ENCODE measurements at regions of chr6 and their contacts with region 1.

Region 1: DNA sequence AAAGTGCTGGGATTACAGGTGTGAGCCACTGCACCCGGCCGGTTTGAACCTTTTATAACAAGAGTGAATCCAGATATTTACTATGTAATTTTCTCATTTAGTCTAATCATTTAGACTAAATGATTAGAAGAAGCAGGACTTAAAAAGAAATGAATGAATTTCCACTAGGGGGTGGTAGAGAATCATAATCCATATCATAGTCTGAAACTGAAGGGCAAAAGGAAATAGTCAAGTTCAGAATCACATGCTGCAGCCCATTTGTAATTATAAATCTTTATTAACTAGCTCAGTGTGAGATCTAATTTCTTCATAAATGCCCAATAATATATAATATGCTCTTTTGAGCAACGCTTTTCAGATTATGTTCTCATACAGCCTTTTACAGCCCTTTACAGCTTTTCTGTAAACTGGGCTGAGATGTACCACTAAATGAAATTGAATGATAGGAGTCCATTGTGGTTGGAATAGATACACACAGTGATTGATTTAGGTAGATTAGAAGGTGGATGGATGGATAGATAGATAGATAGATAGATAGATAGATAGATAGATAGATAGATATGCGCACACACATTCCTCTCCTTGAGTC is 31.8 kb downstream of the PSMB9 start:
- DNase-seq: no peak
- H3K4me3 ChIP-seq: no peak overlapping the region
- H3K27ac ChIP-seq: no peak overlapping the region
- H3K4me1 ChIP-seq: peaks cover 21% of the 10 kb centered on the region
- H3K27me3 ChIP-seq: no peaks in the 10 kb centered on the region
- CTCF ChIP-seq: peak; percentile 46 to 72 (median 53)
- POLR2A ChIP-seq: no peak

Region 2: GRCh38 chr6:32807020-32807580 is 78.7 kb before region 1 on chr6:
- intact Hi-C with region 1: no loop called
- DNase-seq: no peak
- H3K4me3 ChIP-seq: no peak overlapping the region
- H3K27ac ChIP-seq: no peak overlapping the region
- H3K4me1 ChIP-seq: no peaks in the 10 kb centered on the region
- H3K27me3 ChIP-seq: no peaks in the 10 kb centered on the region
- CTCF ChIP-seq: no peak
- POLR2A ChIP-seq: no peak

Region 3: GRCh38 chr6:33161354-33162331 is 275.9 kb after region 1 on chr6:
- intact Hi-C with region 1: loop called (anchors 10 kb)
- DNase-seq: no peak
- H3K4me3 ChIP-seq: peak overlapping the region; percentile 45 to 46
- H3K27ac ChIP-seq: peak overlapping the region; percentile 78
- H3K4me1 ChIP-seq: peaks cover 18% of the 10 kb centered on the region
- H3K27me3 ChIP-seq: no peaks in the 10 kb centered on the region
- CTCF ChIP-seq: peak; percentile 66 to 94 (median 83)
- POLR2A ChIP-seq: no peak